ENCODE measurements at regions of chr9 and their contacts with region 1.

Region 1: GRCh38 chr9:36023260-36024048 is 13.3 kb upstream of the RECK start:
- DNase-seq: no peak
- H3K4me3 ChIP-seq: no peak overlapping the region
- H3K27ac ChIP-seq: no peak overlapping the region
- H3K4me1 ChIP-seq: peaks cover 0 to 11% (median 8%) of the 10 kb centered on the region in 4 donors
- H3K27me3 ChIP-seq: no peaks in the 10 kb centered on the region
- CTCF ChIP-seq: peak; percentile 71 to 84 (median 73)
- EP300 ChIP-seq: peak; percentile 5
- POLR2A ChIP-seq: no peak

Region 2: DNA sequence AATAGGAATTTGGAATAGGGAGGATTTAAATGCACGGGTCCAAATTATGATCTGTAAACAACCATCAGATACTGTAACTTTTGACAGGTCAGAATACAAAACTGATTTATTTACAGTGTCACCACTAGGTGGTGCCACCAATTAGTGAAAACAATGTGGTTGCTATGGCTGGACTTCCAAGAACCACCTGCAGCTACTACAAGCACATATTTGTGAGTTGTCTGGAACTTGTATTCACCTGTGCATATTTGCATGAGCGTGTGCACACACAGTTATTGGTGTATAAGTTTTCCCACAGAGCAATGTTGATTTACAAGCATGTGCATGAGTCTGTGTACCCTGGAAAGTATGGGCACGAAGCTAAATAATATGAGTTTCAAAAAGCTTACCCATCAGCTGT is 120.4 kb before region 1 on chr9:
- intact Hi-C with region 1: loop called (anchors 5 kb)
- DNase-seq: no peak
- H3K4me3 ChIP-seq: no peak overlapping the region
- H3K27ac ChIP-seq: no peak overlapping the region
- H3K4me1 ChIP-seq: peaks cover 48 to 55% (median 50%) of the 10 kb centered on the region in 4 donors
- H3K27me3 ChIP-seq: no peaks in the 10 kb centered on the region
- CTCF ChIP-seq: peak; percentile 70 to 86 (median 74)
- EP300 ChIP-seq: no peak
- POLR2A ChIP-seq: no peak

Region 3: DNA sequence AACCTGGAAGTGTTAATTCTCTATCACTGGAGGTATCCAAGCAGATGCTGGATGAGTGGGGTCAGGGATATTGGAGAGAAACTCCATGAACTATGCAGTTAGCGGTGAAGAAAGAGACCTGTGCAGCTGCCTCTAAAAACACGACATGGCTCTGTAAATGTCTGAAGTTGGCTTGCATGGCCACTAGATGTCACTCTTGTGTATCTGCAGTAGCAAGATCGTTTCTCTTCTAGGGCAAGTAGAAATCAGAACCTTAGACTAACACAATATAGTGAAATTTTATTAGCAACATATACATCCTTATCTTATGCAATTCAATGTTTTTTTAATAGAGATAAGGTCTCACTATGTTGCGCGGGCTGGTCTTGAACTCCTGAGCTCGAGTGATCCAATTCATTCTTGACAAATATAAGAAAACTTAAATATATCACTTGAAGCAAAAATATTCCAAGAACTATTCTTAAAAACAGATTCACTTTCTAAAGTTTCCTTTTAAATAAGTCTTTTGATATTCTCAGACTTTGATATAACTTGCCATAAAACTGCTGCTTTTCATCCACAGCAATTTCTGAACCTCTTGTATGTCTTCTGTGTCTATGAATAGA is 68.4 kb before region 1 on chr9:
- intact Hi-C with region 1: loop called (anchors 2 kb)
- DNase-seq: no peak
- H3K4me3 ChIP-seq: no peak overlapping the region
- H3K27ac ChIP-seq: no peak overlapping the region
- H3K4me1 ChIP-seq: peaks cover 0 to 5% (median 4%) of the 10 kb centered on the region in 4 donors
- H3K27me3 ChIP-seq: peaks cover 0 to 9% (median 0%) of the 10 kb centered on the region in 4 donors
- CTCF ChIP-seq: peak; percentile 80 to 90 (median 83)
- EP300 ChIP-seq: no peak
- POLR2A ChIP-seq: no peak

Region 4: DNA sequence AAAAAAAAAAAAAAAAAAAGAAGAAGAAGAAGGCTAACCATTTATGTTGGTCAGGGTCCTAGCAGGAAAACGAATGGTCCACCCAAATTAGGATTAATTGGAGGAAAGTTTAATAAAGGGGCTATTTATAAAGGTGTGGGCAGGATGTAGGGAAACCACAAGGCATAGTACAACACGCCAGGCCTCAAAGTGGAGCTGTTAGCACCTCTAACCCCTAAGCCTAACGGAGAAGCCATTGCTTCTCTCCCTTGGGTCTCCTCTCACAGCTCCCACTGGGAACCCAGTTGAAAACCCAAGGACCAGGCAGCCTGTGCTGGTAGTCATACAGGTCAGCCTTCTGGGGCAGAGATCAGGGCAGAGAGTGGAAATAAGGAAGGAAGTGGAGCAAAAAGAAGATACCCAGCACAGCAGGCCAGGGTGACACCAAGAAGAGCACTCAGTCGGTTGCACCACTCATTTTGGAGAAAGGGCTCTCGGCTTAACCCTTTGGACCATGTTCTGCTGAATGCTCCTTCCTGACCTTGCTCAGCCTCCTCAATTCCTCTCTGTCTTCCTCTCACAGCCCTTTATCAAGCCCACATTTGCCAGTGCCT is 104.3 kb after region 1 on chr9:
- intact Hi-C with region 1: no loop called
- DNase-seq: no peak
- H3K4me3 ChIP-seq: no peak overlapping the region
- H3K27ac ChIP-seq: no peak overlapping the region
- H3K4me1 ChIP-seq: peaks cover 0 to 5% (median 2%) of the 10 kb centered on the region in 4 donors
- H3K27me3 ChIP-seq: no peaks in the 10 kb centered on the region
- CTCF ChIP-seq: no peak
- EP300 ChIP-seq: no peak
- POLR2A ChIP-seq: no peak